B cell (primary cell): ENCODE measurements at regions of chr11 and their contacts with region 1.

Region 1: GRCh38 chr11:12043959-12044819 is 35.8 kb upstream of the DKK3 start:
- DNase-seq: peak; percentile 71
- ATAC-seq: peak; percentile 69
- H3K4me3 ChIP-seq: no peak overlapping the region
- H3K4me3 Mint-ChIP-seq: no peak overlapping the region
- H3K27ac ChIP-seq: no peak overlapping the region
- H3K27ac Mint-ChIP-seq: no peak overlapping the region
- H3K4me1 ChIP-seq: no peaks in the 10 kb centered on the region
- H3K4me1 Mint-ChIP-seq: no peaks in the 10 kb centered on the region
- H3K27me3 ChIP-seq: no peaks in the 10 kb centered on the region
- H3K27me3 Mint-ChIP-seq: peaks cover 8% of the 10 kb centered on the region
- CTCF ChIP-seq: peak; percentile 93

Region 2: GRCh38 chr11:11731311-11732083 is 312.7 kb before region 1 on chr11:
- CTCF ChIA-PET with region 1: no interaction called
- POLR2A ChIA-PET with region 1: no interaction called
- intact Hi-C with region 1: no loop called
- DNase-seq: no peak
- ATAC-seq: no peak
- H3K4me3 ChIP-seq: no peak overlapping the region
- H3K4me3 Mint-ChIP-seq: no peak overlapping the region
- H3K27ac ChIP-seq: no peak overlapping the region
- H3K27ac Mint-ChIP-seq: no peak overlapping the region
- H3K4me1 ChIP-seq: no peaks in the 10 kb centered on the region
- H3K4me1 Mint-ChIP-seq: no peaks in the 10 kb centered on the region
- H3K27me3 ChIP-seq: peaks cover 0 to 8% (median 1%) of the 10 kb centered on the region in 4 experiments
- H3K27me3 Mint-ChIP-seq: peaks cover 20% of the 10 kb centered on the region
- CTCF ChIP-seq: no peak

Region 3: GRCh38 chr11:12032968-12033367 is 11.2 kb before region 1 on chr11:
- CTCF ChIA-PET with region 1: interaction called, 11 read pairs
- POLR2A ChIA-PET with region 1: no interaction called
- intact Hi-C with region 1: no loop called
- DNase-seq: no peak
- ATAC-seq: no peak
- H3K4me3 ChIP-seq: no peak overlapping the region
- H3K4me3 Mint-ChIP-seq: no peak overlapping the region
- H3K27ac ChIP-seq: no peak overlapping the region
- H3K27ac Mint-ChIP-seq: no peak overlapping the region
- H3K4me1 ChIP-seq: no peaks in the 10 kb centered on the region
- H3K4me1 Mint-ChIP-seq: no peaks in the 10 kb centered on the region
- H3K27me3 ChIP-seq: peaks cover 0 to 3% (median 0%) of the 10 kb centered on the region in 4 experiments
- H3K27me3 Mint-ChIP-seq: peaks cover 31% of the 10 kb centered on the region
- CTCF ChIP-seq: no peak

Region 4: GRCh38 chr11:12235947-12236743 is 192.0 kb after region 1 on chr11:
- CTCF ChIA-PET with region 1: interaction called, 84 read pairs
- POLR2A ChIA-PET with region 1: no interaction called
- intact Hi-C with region 1: no loop called
- DNase-seq: peak; percentile 48
- ATAC-seq: peak; percentile 47
- H3K4me3 ChIP-seq: no peak overlapping the region
- H3K4me3 Mint-ChIP-seq: no peak overlapping the region
- H3K27ac ChIP-seq: no peak overlapping the region
- H3K27ac Mint-ChIP-seq: no peak overlapping the region
- H3K4me1 ChIP-seq: peaks cover 0 to 4% of the 10 kb centered on the region in 2 donors
- H3K4me1 Mint-ChIP-seq: peaks cover 5% of the 10 kb centered on the region
- H3K27me3 ChIP-seq: peaks cover 0 to 3% (median 0%) of the 10 kb centered on the region in 4 experiments
- H3K27me3 Mint-ChIP-seq: peaks cover 13% of the 10 kb centered on the region
- CTCF ChIP-seq: peak; percentile 85